GM18951 (cell line): ENCODE measurements at regions of chr20 and their contacts with region 1.

Region 1: GRCh38 chr20:8829256-8829655 is 239.6 kb upstream of the PLCB4 start:
- POLR2A ChIP-seq: no peak

Region 2: GRCh38 chr20:9359561-9360308 is 530.5 kb after region 1 on chr20:
- in situ Hi-C with region 1: loop called (anchors 25 kb)
- POLR2A ChIP-seq: no peak